ENCODE measurements at regions of chr2 and their contacts with region 1.

Region 1: GRCh38 chr2:13006829-13007717 is 290.3 kb downstream of the TRIB2 start:
- DNase-seq: peak; percentile 74
- ATAC-seq: peak; percentile 63
- H3K4me3 Mint-ChIP-seq: no peak overlapping the region
- H3K27ac Mint-ChIP-seq: no peak overlapping the region
- H3K4me1 Mint-ChIP-seq: peaks cover 3% of the 10 kb centered on the region
- H3K27me3 Mint-ChIP-seq: peaks cover 11% of the 10 kb centered on the region

Region 2: DNA sequence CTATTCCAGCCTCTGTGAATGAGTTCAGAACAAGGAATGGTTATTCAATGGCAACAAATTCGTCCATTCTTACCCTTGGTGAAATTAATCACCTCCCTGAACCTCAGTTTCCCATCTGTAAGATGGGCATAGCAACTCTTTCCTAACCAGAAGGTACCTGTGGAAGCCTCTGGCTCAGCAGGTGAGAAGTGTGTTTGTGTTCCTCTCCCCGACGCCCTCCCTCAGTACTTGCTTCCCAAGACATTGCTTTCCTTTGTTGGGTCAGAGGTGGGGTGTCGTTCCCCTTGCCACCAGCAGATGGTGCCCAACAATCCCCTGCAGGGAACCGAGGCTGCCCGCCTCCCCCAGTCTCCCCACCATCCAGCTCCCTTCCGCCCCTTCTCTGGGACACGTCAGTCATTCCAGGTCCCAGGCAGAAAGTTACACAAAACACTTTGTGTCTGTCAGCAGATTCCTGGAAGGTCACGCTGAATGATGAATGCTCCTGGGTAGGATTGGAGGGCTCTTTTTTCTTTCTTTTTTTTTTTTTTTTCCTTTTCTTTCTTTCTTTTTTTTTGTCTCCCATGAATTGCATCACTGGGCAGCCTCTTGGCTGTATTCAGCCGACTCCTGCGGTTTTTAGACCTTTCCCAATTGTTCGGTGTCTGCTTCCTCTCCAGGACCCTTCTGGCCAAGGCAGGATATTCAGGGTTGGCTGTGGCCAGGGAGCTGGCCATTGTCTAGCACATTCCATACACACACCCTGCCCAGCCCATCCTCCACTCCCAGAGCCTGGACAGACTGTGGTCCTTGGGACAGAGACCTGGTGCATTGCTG is 1143.4 kb before region 1 on chr2:
- CTCF ChIA-PET with region 1: no interaction called
- POLR2A ChIA-PET with region 1: no interaction called
- intact Hi-C with region 1: loop called (anchors 1 to 2 kb)
- DNase-seq: peak; percentile 80
- ATAC-seq: peak; percentile 49
- H3K4me3 Mint-ChIP-seq: peak overlapping the region; percentile 11
- H3K27ac Mint-ChIP-seq: no peak overlapping the region
- H3K4me1 Mint-ChIP-seq: peaks cover 29% of the 10 kb centered on the region
- H3K27me3 Mint-ChIP-seq: peaks cover 13% of the 10 kb centered on the region

Region 3: GRCh38 chr2:12416600-12416999 is 590.5 kb before region 1 on chr2:
- CTCF ChIA-PET with region 1: interaction called, 3 read pairs
- POLR2A ChIA-PET with region 1: no interaction called
- intact Hi-C with region 1: loop called in 1 of 2 experiments (anchors 5 kb)
- DNase-seq: peak; percentile 69
- ATAC-seq: peak; percentile 43
- H3K4me3 Mint-ChIP-seq: no peak overlapping the region
- H3K27ac Mint-ChIP-seq: no peak overlapping the region
- H3K4me1 Mint-ChIP-seq: peaks cover 36% of the 10 kb centered on the region
- H3K27me3 Mint-ChIP-seq: no peaks in the 10 kb centered on the region

Region 4: DNA sequence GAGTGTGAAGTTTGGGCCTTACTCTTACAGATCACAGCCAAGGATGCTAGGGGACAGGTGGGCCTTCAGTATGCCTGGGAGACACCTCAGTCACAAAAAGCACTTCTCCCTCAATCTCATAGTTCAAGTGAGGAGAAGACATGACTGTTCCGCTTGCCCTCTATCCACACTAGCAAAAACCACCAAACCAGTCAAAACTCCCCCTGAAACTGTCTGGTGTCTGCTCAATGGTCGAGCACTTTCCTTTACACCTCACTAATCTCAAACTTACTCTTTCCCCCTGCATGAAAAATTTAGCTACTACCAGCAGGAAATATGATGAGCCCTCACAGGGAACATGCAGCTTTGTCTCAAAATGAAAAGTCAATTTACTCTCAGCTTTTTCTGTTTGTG is 58.1 kb before region 1 on chr2:
- CTCF ChIA-PET with region 1: interaction called, 7 read pairs
- POLR2A ChIA-PET with region 1: no interaction called
- intact Hi-C with region 1: loop called in 1 of 2 experiments (anchors 5 kb)
- DNase-seq: peak; percentile 46
- ATAC-seq: peak; percentile 84
- H3K4me3 Mint-ChIP-seq: no peak overlapping the region
- H3K27ac Mint-ChIP-seq: peak overlapping the region; percentile 26
- H3K4me1 Mint-ChIP-seq: peaks cover 10% of the 10 kb centered on the region
- H3K27me3 Mint-ChIP-seq: peaks cover 17% of the 10 kb centered on the region

Region 5: GRCh38 chr2:13156916-13157315 is 149.8 kb after region 1 on chr2:
- CTCF ChIA-PET with region 1: no interaction called
- POLR2A ChIA-PET with region 1: no interaction called
- intact Hi-C with region 1: no loop called
- DNase-seq: no peak
- ATAC-seq: no peak
- H3K4me3 Mint-ChIP-seq: no peak overlapping the region
- H3K27ac Mint-ChIP-seq: no peak overlapping the region
- H3K4me1 Mint-ChIP-seq: no peaks in the 10 kb centered on the region
- H3K27me3 Mint-ChIP-seq: peaks cover 25% of the 10 kb centered on the region